ENCODE measurements at regions of chr1 and their contacts with region 1.

Region 1: DNA sequence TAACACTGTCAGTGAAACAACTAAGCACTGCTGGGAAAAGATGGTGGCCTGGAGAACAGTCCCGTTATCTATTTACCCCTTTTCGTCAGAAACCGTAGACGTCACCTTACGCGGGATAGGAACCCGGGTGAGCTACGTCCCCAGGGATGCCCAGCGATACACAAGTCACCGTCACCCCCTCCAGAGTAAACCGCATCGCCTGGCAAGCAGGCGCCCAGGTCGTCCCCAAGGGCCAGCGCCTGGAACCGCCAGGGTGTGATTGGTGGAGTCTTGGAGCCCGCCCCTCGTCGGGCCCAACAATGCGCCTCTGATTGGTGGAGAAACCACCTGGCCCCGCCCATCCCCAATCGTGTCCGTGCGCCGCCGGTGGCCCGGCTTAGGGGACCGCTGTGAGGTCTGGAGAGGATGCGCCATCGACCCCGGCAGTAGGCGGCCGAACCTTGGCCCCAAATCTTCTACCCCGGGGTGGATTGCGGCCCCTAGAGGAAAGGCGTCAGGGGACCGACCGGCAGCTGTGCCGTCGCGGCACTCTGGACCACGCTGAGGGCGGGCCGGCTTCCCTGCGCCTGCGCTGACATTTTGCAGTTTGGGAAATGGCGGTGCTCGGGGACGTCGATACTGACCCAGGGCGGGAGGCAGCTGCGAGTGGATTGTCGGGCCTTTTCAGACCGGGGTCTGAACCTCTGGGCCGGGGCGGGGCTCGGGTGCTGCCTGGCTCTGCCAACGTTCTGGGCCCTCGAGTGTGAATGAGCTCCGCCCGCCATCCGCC is 34.4 kb downstream of the SLC2A1 start:
- DNase-seq: peak; percentile 85 to 93 (median 92)
- ATAC-seq: peak; percentile 96
- H3K4me3 ChIP-seq: peak overlapping the region; percentile 99
- H3K4me3 Mint-ChIP-seq: peak overlapping the region; percentile 77 to 98 (median 92)
- H3K27ac ChIP-seq: peak overlapping the region; percentile 82
- H3K27ac Mint-ChIP-seq: peak overlapping the region; percentile 79 to 98 (median 96)
- H3K4me1 ChIP-seq: peaks cover 15 to 16% of the 10 kb centered on the region in 2 donors
- H3K4me1 Mint-ChIP-seq: peaks cover 16 to 50% (median 39%) of the 10 kb centered on the region in 7 donors
- H3K27me3 ChIP-seq: no peaks in the 10 kb centered on the region
- H3K27me3 Mint-ChIP-seq: no peaks in the 10 kb centered on the region

Region 2: GRCh38 chr1:42681741-42682483 is 242.4 kb before region 1 on chr1 and contains the start of gene YBX1:
- CTCF ChIA-PET with region 1: no interaction called
- POLR2A ChIA-PET with region 1: interaction called, 3 read pairs
- intact Hi-C with region 1: loop called (anchors 1 to 5 kb)
- DNase-seq: peak; percentile 85 to 98 (median 97)
- ATAC-seq: peak; percentile 94
- H3K4me3 ChIP-seq: peak within 1 kb of the TSS; percentile 74
- H3K4me3 Mint-ChIP-seq: peak within 1 kb of the TSS; percentile 95 to 99 (median 98)
- H3K27ac ChIP-seq: peak within 1 kb of the TSS; percentile 82
- H3K27ac Mint-ChIP-seq: peak within 1 kb of the TSS; percentile 93 to 98 (median 97)
- H3K4me1 ChIP-seq: peaks cover 35 to 47% of the 10 kb centered on the region in 2 donors
- H3K4me1 Mint-ChIP-seq: peaks cover 42 to 66% (median 54%) of the 10 kb centered on the region in 7 donors
- H3K27me3 ChIP-seq: no peaks in the 10 kb centered on the region
- H3K27me3 Mint-ChIP-seq: no peaks in the 10 kb centered on the region
- total RNA-seq, gene YBX1: 277 to 471 (median 287) TPM

Region 3: DNA sequence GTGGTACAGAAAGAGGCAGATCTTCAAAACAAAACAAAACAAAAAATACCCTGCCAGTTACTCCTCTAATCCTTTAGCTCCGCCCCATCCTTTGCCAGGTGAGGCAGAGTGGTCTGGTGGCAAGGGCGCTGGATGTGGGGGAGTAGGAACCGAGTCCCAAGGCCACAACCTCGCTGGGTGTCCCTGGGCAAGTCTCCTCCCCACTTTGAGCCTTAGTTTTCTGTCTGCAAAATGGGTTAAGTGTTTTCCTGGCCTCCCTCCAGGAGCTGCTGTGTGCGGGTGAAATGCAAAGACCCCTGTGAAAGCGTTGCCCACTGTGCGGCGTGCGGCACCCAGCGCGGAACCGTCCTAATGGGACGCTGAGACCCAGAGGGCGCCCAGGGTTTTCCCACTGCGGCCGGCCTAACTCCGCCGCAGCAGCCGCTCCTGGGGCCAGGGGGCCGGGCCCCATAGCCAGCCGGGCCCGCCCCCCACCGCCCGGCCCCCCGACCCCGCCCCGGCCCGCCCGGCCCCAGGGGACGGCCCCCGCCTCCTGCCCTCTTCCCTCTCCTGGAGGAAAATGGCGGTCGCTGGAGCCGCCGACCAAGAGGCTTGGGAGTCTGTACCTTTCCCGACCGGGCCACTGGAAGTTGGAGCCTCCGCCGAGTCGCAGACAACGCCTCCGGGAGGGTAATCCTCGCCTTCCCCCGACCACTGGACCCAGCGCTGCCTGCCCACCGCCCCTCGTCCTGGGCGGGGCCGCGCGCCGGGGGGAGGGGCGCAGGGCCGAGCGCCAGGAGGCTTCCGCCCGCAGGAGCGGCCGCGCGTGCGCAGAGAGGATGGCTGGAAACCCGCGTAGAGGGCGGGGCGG is 107.5 kb before region 1 on chr1 and contains the starts of genes ERMAP and SVBP:
- CTCF ChIA-PET with region 1: no interaction called
- POLR2A ChIA-PET with region 1: no interaction called
- intact Hi-C with region 1: loop called (anchors 2 to 5 kb)
- DNase-seq: peak; percentile 86 to 98 (median 91)
- ATAC-seq: peak; percentile 97
- H3K4me3 ChIP-seq: peak within 1 kb of the TSS; percentile 69
- H3K4me3 Mint-ChIP-seq: peak within 1 kb of the TSS; percentile 76 to 90 (median 84)
- H3K27ac ChIP-seq: peak within 1 kb of the TSS; percentile 89
- H3K27ac Mint-ChIP-seq: peak within 1 kb of the TSS; percentile 64 to 94 (median 86)
- H3K4me1 ChIP-seq: peaks cover 6 to 10% of the 10 kb centered on the region in 2 donors
- H3K4me1 Mint-ChIP-seq: peaks cover 19 to 35% (median 29%) of the 10 kb centered on the region in 7 donors
- H3K27me3 ChIP-seq: no peaks in the 10 kb centered on the region
- H3K27me3 Mint-ChIP-seq: peaks cover 0 to 10% (median 0%) of the 10 kb centered on the region in 5 donors
- total RNA-seq, gene ERMAP: 6.1 to 10.3 (median 6.7) TPM
- total RNA-seq, gene SVBP: 12.7 to 22.2 (median 17.8) TPM

Region 4: GRCh38 chr1:42913426-42914091 is 10.7 kb before region 1 on chr1:
- CTCF ChIA-PET with region 1: interaction called, 41 read pairs
- POLR2A ChIA-PET with region 1: interaction called, 15 read pairs
- intact Hi-C with region 1: loop called (anchors 1 kb)
- DNase-seq: peak in 7 of 9 donors; percentile 54 to 84 (median 76)
- ATAC-seq: peak; percentile 94
- H3K4me3 ChIP-seq: no peak overlapping the region
- H3K4me3 Mint-ChIP-seq: no peak overlapping the region
- H3K27ac ChIP-seq: no peak overlapping the region
- H3K27ac Mint-ChIP-seq: no peak overlapping the region
- H3K4me1 ChIP-seq: no peaks in the 10 kb centered on the region
- H3K4me1 Mint-ChIP-seq: peaks cover 0 to 5% (median 4%) of the 10 kb centered on the region in 7 donors
- H3K27me3 ChIP-seq: no peaks in the 10 kb centered on the region
- H3K27me3 Mint-ChIP-seq: peaks cover 0 to 8% (median 0%) of the 10 kb centered on the region in 5 donors

Region 5: GRCh38 chr1:42952303-42953001 is 28.2 kb after region 1 on chr1:
- CTCF ChIA-PET with region 1: interaction called, 12 read pairs
- POLR2A ChIA-PET with region 1: interaction called, 134 read pairs
- intact Hi-C with region 1: no loop called
- DNase-seq: peak in 3 of 9 donors; percentile 33 to 49 (median 40)
- ATAC-seq: peak; percentile 72
- H3K4me3 ChIP-seq: peak overlapping the region; percentile 61
- H3K4me3 Mint-ChIP-seq: peak overlapping the region; percentile 20 to 85 (median 67)
- H3K27ac ChIP-seq: peak overlapping the region; percentile 57
- H3K27ac Mint-ChIP-seq: peak overlapping the region; percentile 28 to 89 (median 80)
- H3K4me1 ChIP-seq: peaks cover 84% of the 10 kb centered on the region in 2 donors
- H3K4me1 Mint-ChIP-seq: peaks cover 76 to 95% (median 87%) of the 10 kb centered on the region in 7 donors
- H3K27me3 ChIP-seq: no peaks in the 10 kb centered on the region
- H3K27me3 Mint-ChIP-seq: no peaks in the 10 kb centered on the region

Region 6: GRCh38 chr1:43073490-43074230 is 149.4 kb after region 1 on chr1:
- CTCF ChIA-PET with region 1: interaction called, 288 read pairs
- POLR2A ChIA-PET with region 1: interaction called, 32 read pairs
- intact Hi-C with region 1: loop called (anchors 1 kb)
- DNase-seq: peak; percentile 46 to 80 (median 69)
- ATAC-seq: peak; percentile 90
- H3K4me3 ChIP-seq: no peak overlapping the region
- H3K4me3 Mint-ChIP-seq: no peak overlapping the region
- H3K27ac ChIP-seq: no peak overlapping the region
- H3K27ac Mint-ChIP-seq: peak overlapping the region in 2 of 9 donors; percentile 33 to 89
- H3K4me1 ChIP-seq: no peaks in the 10 kb centered on the region
- H3K4me1 Mint-ChIP-seq: peaks cover 0 to 11% (median 6%) of the 10 kb centered on the region in 7 donors
- H3K27me3 ChIP-seq: no peaks in the 10 kb centered on the region
- H3K27me3 Mint-ChIP-seq: peaks cover 0 to 8% (median 0%) of the 10 kb centered on the region in 5 donors

Region 7: GRCh38 chr1:43367904-43368645 is 443.8 kb after region 1 on chr1 and contains the start of gene ELOVL1:
- CTCF ChIA-PET with region 1: no interaction called
- POLR2A ChIA-PET with region 1: no interaction called
- intact Hi-C with region 1: loop called in 1 of 2 experiments (anchors 10 kb)
- DNase-seq: peak; percentile 40 to 94 (median 58)
- ATAC-seq: peak; percentile 91
- H3K4me3 ChIP-seq: peak within 1 kb of the TSS; percentile 89
- H3K4me3 Mint-ChIP-seq: peak within 1 kb of the TSS; percentile 86 to 97 (median 92)
- H3K27ac ChIP-seq: peak within 1 kb of the TSS; percentile 90
- H3K27ac Mint-ChIP-seq: peak within 1 kb of the TSS; percentile 88 to 95 (median 91)
- H3K4me1 ChIP-seq: peaks cover 13 to 22% of the 10 kb centered on the region in 2 donors
- H3K4me1 Mint-ChIP-seq: peaks cover 24 to 47% (median 42%) of the 10 kb centered on the region in 7 donors
- H3K27me3 ChIP-seq: no peaks in the 10 kb centered on the region
- H3K27me3 Mint-ChIP-seq: no peaks in the 10 kb centered on the region
- total RNA-seq, gene ELOVL1: 25.9 to 65.3 (median 32.3) TPM

Measured in naive thymus-derived CD4-positive, alpha-beta T cell (primary cell).